Dorsolateral prefrontal cortex (tissue), 120 donors: ENCODE measurements at regions of chr3 and their contacts with region 1.

Region 1: DNA sequence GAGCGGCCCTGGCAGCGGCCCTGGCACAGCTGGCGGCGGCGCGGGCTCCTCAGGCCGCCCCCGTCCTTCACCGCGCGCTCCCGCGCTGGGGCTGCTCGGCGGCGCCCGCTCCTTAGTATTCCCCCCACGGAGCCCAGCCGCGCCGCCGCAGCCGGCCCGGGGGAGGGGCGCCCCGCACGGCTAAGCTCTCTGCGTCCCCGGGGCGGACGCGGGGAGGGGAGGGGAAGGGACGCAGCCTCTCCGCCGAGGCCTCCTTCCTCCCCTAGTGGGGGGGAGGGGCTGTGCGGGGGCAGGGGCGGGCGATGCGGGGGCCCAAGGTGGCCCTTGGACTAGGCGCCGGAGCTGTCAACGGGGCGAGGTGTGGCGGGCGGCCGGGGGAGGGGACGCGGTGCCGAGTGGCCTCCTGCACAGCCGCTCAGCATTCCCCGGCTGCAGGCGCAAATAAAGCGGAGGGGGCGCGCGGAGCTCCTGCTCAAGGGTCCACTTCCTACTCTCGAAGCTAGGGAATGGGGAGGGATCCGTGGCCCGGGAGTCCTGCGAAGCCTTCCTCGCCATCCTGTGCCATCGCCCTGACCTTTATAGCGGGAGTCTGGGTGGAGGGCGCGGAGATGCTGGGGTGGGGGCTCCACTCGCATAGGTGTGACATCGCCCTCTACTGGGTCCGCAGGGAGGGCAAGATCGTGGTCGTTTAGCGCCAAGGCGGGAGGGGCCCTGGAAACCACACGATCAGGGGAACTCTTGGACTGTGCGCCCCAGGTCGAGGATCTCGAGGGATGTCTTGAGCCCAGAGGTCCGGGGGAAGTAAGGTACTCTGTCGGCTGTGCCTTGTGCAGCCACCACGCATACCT is 22.2 kb downstream of the EPHB3 start:
- DNase-seq: peak in 9 of 10 donors; percentile 55 to 87 (median 65)
- H3K4me3 ChIP-seq: peak overlapping the region; percentile 52 to 81 (median 69)
- H3K27ac ChIP-seq: peak overlapping the region; percentile 15 to 97 (median 89)
- H3K27me3 ChIP-seq: no peaks in the 10 kb centered on the region
- CTCF ChIP-seq: peak in 40 of 56 donors; percentile 0 to 48 (median 32)

Region 2: DNA sequence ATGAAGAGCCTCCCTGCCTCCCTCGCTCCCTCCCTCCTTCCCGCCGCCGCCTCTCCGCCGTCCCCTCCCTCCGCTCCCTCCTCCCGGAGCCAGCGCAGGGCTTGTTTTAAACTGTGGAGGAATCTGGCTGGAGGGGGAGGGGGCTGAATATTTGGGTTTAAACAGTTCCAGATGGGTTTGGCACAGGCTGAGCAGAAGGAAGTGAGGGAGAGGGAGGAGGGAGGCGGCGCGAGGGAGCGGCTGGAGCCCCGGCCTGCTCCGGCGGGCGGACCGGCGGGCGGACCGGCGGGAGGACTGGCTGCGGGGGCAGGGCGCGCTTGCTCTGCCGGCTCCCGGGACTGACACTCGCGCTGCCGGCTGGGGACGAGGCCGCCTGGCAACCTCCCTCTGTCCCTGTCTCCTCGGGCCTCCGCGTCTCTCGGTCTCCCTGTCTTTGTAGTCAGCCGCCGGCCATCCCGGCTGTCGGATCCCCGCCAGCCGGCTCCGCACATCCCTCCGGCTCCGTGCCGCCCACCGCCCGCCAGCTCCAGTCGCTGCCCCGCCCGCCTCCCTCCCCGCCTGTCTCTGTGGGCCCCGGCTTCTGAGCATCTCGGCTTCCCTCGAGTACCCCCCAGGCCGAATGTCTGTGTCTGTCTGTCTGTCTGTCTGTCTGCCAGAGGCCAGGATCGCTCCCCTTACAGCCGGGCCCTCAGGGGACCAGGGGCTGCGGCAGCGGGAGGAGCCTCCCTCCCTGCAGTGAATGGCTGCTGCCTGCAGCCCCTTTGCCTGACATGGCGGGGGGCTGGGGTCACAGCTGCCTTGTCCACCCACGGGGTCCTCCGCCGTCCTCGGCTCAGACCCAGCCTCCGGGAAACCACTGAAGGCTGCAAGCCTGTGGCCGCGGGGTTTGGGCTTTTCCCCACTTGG is 14.6 kb before region 1 on chr3:
- intact Hi-C with region 1: loop called in 1 of 2 experiments (anchors 2 kb)
- DNase-seq: peak in 7 of 10 donors; percentile 65 to 78 (median 71)
- H3K4me3 ChIP-seq: peak overlapping the region; percentile 22 to 75 (median 61)
- H3K27ac ChIP-seq: peak overlapping the region in 55 of 59 donors; percentile 2 to 90 (median 74)
- H3K27me3 ChIP-seq: no peaks in the 10 kb centered on the region
- CTCF ChIP-seq: peak in 1 of 56 donors; percentile 10

Region 3: GRCh38 chr3:184602416-184603150 is 18.8 kb after region 1 on chr3:
- intact Hi-C with region 1: no loop called
- DNase-seq: peak in 1 of 10 donors; percentile 23
- H3K4me3 ChIP-seq: peak overlapping the region in 21 of 59 donors; percentile 5 to 47 (median 27)
- H3K27ac ChIP-seq: no peak overlapping the region
- H3K27me3 ChIP-seq: peaks cover 0 to 49% (median 19%) of the 10 kb centered on the region in 45 donors
- CTCF ChIP-seq: no peak